Posterior vena cava (tissue), 2 donors: ENCODE measurements at regions of chr7 and their contacts with region 1.

Region 1: GRCh38 chr7:107551936-107552335 is 11.8 kb downstream of the COG5 start:
- DNase-seq: no peak

Region 2: GRCh38 chr7:107186242-107186641 is 365.7 kb before region 1 on chr7:
- intact Hi-C with region 1: no loop called
- DNase-seq: no peak

Region 3: GRCh38 chr7:107262857-107263256 is 289.1 kb before region 1 on chr7:
- intact Hi-C with region 1: no loop called
- DNase-seq: no peak

Region 4: GRCh38 chr7:107384025-107384424 is 167.9 kb before region 1 on chr7:
- intact Hi-C with region 1: no loop called
- DNase-seq: no peak

Region 5: DNA sequence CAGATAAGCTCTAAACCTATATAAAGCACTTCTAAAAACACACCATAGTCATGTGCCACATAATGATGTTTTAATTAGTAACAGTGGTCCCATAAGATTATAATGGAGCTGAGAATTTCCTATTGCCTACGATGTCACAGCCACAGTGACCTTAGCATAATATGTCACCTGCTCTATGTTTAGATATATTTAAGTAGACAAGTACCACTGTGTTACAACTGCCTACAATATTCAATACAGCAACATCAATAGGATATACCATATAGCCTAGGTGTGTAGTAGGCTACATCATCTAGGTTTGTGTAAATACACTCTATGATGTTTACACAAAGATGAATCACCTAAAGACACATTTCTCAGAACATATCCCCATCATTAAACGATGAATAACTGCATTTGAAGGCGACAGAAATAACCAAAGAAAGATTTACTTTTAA is 57.6 kb before region 1 on chr7:
- intact Hi-C with region 1: loop called in 1 of 2 experiments (anchors 2 kb)
- DNase-seq: no peak

Region 6: DNA sequence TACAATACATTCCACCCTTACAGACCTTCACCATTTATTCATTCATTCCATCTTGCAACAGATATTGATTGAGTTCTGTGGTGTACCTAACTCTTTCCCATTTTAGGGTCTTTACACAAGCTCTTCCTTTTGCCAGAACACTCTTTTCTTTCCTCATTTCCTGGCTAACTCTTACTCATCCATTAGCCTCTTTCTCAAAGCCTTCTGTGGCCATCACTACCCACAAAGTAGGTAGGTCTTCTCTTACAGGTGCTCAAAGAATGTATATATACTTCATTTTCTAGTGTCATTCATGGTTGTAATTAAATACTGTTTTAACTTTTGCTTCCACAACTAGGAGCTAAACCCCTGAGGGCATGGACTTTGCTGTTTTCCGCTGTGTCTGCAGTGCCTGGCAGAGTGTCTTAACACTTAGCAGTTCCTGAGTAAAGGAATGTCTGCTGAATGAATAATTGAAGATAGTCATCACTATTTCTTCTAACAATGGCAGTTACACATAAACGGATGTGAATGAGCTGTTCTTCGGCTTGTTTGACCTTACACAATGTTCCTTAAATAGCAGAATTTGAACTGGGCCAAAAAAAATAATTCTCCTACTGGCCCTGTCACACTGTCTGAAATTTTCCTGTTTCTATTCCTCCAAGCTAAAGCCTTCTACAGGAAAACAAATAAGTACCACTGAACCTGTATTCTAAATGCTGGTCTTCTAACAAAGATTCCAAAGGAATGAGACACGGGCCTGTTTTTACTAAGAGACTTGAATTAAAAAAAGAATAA is 43.2 kb after region 1 on chr7:
- intact Hi-C with region 1: no loop called
- DNase-seq: no peak